Activated T-helper 1 cell treated with anti-CD3 and anti-CD28 coated beads, Interleukin-12 subunit alpha, Interleukin-12 subunit beta, Interleukin-2, Interleukin-4 antibody, amounts not matched to agents 30 ng/mL and 10 ng/mL and 1 ng/mL, durations not matched to agents 14 hours and 24 hours and 36 hours (primary cell): ENCODE measurements at regions of chr19 and their contacts with region 1.

Region 1: GRCh38 chr19:41397086-41398049 is at the starts of genes BCKDHA and EXOSC5:
- DNase-seq: peak; percentile 99
- H3K4me3 Mint-ChIP-seq: peak within 1 kb of the TSS; percentile 97
- H3K27ac Mint-ChIP-seq: peak within 1 kb of the TSS; percentile 99
- H3K4me1 Mint-ChIP-seq: peaks cover 28% of the 10 kb centered on the region
- H3K27me3 Mint-ChIP-seq: no peaks in the 10 kb centered on the region
- total RNA-seq, gene BCKDHA: 14.6 and 22.7 TPM in 2 replicates
- total RNA-seq, gene EXOSC5: 59.3 and 66.6 TPM in 2 replicates

Region 2: DNA sequence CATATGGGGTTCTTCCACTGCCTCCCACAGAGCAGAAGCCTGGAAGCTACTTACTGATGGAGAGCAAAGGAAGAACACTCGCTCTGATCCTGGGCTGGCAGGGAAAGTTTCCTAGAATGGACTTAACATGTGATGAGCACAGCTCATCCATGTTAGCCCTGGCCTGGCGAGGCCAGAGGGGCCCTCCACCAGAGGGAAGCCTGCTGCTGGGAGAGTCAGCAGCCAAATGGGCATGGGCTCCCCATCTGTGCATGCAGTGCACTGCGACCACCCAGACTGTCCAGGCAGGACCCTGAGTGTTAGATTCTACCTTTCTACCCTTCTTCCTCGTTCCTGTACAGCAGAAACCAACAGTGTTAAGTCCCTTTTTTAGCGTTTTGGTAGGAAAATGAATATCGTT is 124.3 kb before region 1 on chr19:
- intact Hi-C with region 1: no loop called
- DNase-seq: no peak
- H3K4me3 Mint-ChIP-seq: no peak overlapping the region
- H3K27ac Mint-ChIP-seq: no peak overlapping the region
- H3K4me1 Mint-ChIP-seq: peaks cover 5% of the 10 kb centered on the region
- H3K27me3 Mint-ChIP-seq: no peaks in the 10 kb centered on the region

Region 3: DNA sequence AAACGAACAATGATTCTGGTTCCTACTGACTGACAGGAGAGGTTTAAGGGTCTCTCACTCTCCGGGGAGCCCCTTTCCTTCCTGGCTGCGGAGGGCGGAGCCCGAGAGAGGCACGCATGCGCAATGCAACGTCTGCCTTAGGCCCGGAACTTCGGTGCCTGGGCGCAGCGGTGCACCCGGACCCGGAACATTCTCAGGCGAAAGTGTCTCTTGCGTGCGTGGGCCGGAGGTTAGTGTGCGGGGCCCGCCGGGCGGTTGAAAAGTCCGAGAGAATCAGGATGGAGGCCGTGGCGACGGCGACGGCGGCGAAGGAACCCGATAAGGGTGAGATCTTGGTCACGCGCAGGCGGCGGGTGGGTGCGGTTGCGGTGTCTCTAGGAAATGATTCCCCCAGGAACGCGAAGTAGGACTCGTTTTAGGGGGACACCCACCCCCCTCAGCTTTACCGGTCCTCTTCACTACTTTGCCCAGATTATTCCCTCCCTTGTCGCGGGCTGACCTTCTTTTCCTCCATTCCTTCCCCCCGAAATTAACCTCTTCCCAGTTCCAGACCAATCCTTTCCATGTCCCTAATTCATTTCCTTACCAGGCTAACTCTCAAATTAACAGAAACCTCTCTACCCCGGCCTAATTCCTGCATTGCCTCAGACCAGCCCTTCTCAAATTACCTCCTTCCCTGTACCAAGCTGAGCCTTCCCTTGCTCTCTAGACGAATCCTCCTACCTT is 87.2 kb before region 1 on chr19 and contains the start of gene CCDC97:
- intact Hi-C with region 1: loop called (anchors 5 kb)
- DNase-seq: peak; percentile 89
- H3K4me3 Mint-ChIP-seq: peak within 1 kb of the TSS; percentile 95
- H3K27ac Mint-ChIP-seq: peak within 1 kb of the TSS; percentile 94
- H3K4me1 Mint-ChIP-seq: peaks cover 65% of the 10 kb centered on the region
- H3K27me3 Mint-ChIP-seq: no peaks in the 10 kb centered on the region
- total RNA-seq, gene CCDC97: 35.3 and 36.1 TPM in 2 replicates

Region 4: GRCh38 chr19:41363753-41364523 is 33.4 kb before region 1 on chr19 and contains the start of gene B9D2:
- intact Hi-C with region 1: loop called (anchors 1 kb)
- DNase-seq: peak; percentile 97
- H3K4me3 Mint-ChIP-seq: peak within 1 kb of the TSS; percentile 88
- H3K27ac Mint-ChIP-seq: peak within 1 kb of the TSS; percentile 98
- H3K4me1 Mint-ChIP-seq: peaks cover 30% of the 10 kb centered on the region
- H3K27me3 Mint-ChIP-seq: no peaks in the 10 kb centered on the region
- total RNA-seq, gene B9D2: 4.4 and 4.5 TPM in 2 replicates

Region 5: GRCh38 chr19:41531438-41532311 is 134.3 kb after region 1 on chr19:
- intact Hi-C with region 1: loop called (anchors 5 kb)
- DNase-seq: peak; percentile 87
- H3K4me3 Mint-ChIP-seq: peak overlapping the region; percentile 82
- H3K27ac Mint-ChIP-seq: peak overlapping the region; percentile 87
- H3K4me1 Mint-ChIP-seq: peaks cover 91% of the 10 kb centered on the region
- H3K27me3 Mint-ChIP-seq: no peaks in the 10 kb centered on the region

Region 6: GRCh38 chr19:41597600-41598041 is 200.3 kb after region 1 on chr19:
- intact Hi-C with region 1: loop called (anchors 5 kb)
- DNase-seq: peak; percentile 59
- H3K4me3 Mint-ChIP-seq: no peak overlapping the region
- H3K27ac Mint-ChIP-seq: no peak overlapping the region
- H3K4me1 Mint-ChIP-seq: peaks cover 11% of the 10 kb centered on the region
- H3K27me3 Mint-ChIP-seq: peaks cover 24% of the 10 kb centered on the region

Region 7: DNA sequence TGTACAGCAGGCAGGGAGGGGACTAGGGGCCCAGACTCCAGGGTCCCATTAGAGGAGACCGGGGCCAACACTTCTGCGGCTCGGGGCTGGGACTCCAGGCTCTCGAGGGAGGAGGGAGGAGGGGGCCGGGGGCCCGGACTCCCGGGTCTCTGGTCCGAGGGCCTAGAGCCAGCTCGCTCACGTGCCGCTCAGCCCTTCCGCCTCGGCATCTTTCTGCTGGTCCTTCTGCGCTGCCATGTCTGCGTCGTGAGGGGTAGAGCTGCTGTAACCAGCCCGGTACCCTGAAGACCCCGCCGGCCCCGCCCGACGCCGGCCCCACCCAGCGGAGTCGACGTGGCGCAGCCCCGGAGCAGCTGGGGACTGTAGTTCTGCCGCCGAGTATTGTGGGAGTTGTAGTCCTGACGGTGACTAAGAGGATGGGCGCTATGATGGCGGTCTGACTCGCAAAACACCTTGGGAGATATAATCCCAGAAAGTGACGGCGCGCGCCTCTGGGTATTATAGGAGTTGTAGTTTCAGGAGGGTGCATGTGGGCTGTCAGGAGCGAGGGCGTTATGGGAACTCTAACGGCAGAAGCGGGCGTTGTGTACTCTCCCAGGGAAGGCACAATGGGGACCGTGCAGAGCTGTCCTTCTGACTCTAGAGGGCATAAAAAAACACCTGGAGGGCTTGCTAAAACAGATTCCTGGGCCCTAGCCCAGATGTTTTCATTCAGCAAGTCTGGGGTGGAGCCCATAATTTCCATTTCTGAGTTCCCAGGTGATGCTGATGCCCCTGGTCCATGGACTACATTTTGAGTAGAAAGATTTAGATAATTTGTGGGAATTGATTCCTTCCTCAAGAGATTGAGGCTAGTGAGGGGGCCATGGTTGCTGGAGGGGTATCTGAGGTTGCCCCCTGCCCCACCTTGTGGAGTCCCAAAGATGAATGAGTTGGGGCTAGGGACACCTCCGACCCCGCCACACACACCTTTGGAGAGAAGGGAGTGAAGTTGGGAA is 562.0 kb after region 1 on chr19 and contains the start of gene RABAC1:
- intact Hi-C with region 1: loop called (anchors 1 kb)
- DNase-seq: peak; percentile 87
- H3K4me3 Mint-ChIP-seq: peak within 1 kb of the TSS; percentile 88
- H3K27ac Mint-ChIP-seq: peak within 1 kb of the TSS; percentile 90
- H3K4me1 Mint-ChIP-seq: peaks cover 17% of the 10 kb centered on the region
- H3K27me3 Mint-ChIP-seq: peaks cover 2% of the 10 kb centered on the region
- total RNA-seq, gene RABAC1: 36.2 and 41.3 TPM in 2 replicates